Spleen (tissue), 13 donors: ENCODE measurements at regions of chr12 and their contacts with region 1.

Region 1: DNA sequence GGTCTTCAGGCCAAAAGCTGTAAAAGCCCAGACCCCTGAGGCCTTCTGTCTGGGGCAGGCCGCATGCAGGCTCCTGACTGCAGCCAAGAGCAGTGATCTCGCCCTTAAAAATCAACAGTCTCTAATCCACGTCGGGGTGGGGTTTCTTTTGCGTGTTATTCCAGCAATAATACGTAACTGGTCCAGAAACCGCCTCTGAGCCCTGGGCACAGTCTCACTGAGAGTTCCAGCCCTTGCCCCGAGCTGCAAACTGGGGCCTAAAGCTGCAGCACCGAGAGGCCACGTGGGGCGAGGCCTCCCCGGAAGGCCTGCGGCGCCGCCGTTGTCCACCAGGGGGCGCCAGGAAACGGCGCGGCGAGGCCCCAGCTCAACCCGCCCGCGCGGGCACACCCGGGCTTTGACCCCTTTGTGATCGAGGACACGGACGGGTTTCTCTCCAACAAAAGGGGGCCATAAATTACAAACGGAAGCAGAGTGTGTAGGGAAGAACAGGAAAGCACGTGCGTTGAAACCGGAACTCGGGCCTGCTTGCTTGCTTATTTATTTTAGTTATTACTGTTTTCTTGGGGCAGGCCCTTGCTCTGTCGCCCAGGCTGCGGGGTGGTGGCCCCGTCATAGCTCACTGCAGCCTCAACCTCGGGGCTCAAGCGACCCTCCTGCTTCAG is 87.2 kb downstream of the NINJ2 start:
- DNase-seq: peak; percentile 97
- H3K4me3 ChIP-seq: peak overlapping the region in 5 of 8 donors; percentile 5 to 56 (median 15)
- H3K27ac ChIP-seq: peak overlapping the region in 7 of 8 donors; percentile 26 to 78 (median 67)
- H3K4me1 ChIP-seq: peaks cover 9 to 36% (median 18%) of the 10 kb centered on the region in 6 donors
- H3K27me3 ChIP-seq: no peaks in the 10 kb centered on the region
- CTCF ChIP-seq: peak; percentile 98 to 100 (median 100)
- POLR2A ChIP-seq: no peak

Region 2: DNA sequence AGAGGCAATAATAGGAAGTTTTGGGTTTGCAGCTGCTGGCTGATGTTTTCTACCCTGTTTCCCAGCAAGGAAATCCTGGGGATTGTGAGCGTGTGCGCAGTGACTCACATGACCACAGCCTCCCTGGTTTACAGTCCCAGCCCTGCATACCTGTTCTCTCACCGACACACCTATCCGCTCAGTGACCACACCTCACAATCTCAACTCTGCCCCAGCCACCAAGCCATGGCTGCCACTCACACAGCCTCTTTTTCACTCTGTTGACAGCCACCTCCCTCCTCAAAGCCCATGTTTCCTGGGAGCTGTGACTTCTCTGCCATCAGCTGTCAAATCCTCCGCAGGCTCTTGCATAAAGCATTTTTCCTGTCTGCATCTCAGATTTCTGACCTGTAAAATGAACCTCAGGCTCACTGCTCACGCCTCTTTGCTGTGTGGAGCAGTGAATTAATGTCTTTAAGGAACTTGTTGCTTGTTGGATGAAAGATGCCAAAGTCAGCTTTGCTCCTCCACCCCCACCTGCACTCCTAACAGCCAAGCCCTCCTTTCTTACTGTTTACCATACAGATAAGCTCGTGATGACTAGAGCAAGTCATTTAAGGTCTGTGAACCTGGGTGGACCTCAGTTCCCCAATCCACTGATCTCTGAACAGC is 72.8 kb before region 1 on chr12:
- intact Hi-C with region 1: no loop called
- DNase-seq: no peak
- H3K4me3 ChIP-seq: no peak overlapping the region
- H3K27ac ChIP-seq: no peak overlapping the region
- H3K4me1 ChIP-seq: no peaks in the 10 kb centered on the region
- H3K27me3 ChIP-seq: peaks cover 0 to 16% (median 0%) of the 10 kb centered on the region in 7 donors
- CTCF ChIP-seq: no peak
- POLR2A ChIP-seq: no peak

Region 3: DNA sequence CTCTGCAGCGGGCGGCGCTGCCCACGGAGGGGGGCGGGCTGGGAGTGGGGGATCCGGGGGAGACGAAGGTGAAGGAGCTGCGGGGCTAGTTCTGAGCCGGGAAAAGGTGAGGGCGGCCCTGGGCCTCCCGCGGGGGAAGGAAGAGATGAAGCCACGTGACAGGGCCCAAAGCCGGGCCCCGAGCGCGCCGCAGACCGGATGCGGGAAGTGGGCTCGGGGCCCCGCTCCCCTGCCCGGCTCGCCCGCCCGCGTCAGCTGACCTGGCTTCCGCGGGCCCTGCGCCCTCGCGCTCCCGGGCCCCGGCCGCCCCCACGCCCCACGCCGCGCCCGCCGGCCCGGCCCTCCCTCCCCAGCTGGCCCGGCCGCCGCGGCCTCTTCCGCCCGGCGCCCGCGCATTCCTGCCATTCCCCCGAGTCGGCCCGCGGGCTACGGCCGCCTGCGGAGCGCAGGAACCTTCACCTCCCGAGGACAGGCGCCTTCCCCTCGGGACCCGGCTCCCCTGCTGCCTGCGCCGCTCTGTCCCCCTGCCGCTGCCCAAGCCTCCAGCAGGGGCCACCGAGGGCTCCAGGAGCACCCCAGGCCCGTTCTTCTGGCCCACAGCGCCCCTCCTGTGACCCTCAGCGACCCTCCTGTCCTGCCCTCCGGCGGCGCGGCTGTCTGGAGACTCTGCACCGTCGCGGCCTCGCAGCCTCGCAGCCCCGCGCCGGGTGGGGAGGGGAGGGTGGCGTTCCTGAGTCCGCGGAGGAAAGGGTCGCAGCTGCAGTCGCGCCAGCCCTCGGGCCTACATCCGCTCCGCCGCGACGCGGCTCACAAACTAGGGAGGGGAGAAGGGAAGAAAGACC is 66.8 kb after region 1 on chr12:
- intact Hi-C with region 1: loop called (anchors 5 kb)
- DNase-seq: peak; percentile 97
- H3K4me3 ChIP-seq: peak overlapping the region; percentile 46 to 85 (median 62)
- H3K27ac ChIP-seq: peak overlapping the region; percentile 99 to 100 (median 99)
- H3K4me1 ChIP-seq: peaks cover 19 to 94% (median 68%) of the 10 kb centered on the region in 6 donors
- H3K27me3 ChIP-seq: no peaks in the 10 kb centered on the region
- CTCF ChIP-seq: peak in 10 of 11 experiments; percentile 19 to 70 (median 54)
- POLR2A ChIP-seq: no peak

Region 4: GRCh38 chr12:751192-751998 is 175.3 kb after region 1 on chr12:
- intact Hi-C with region 1: loop called (anchors 10 kb)
- DNase-seq: peak; percentile 98
- H3K4me3 ChIP-seq: peak overlapping the region; percentile 70 to 89 (median 79)
- H3K27ac ChIP-seq: peak overlapping the region; percentile 85 to 100 (median 98)
- H3K4me1 ChIP-seq: peaks cover 14 to 53% (median 42%) of the 10 kb centered on the region in 6 donors
- H3K27me3 ChIP-seq: no peaks in the 10 kb centered on the region
- CTCF ChIP-seq: peak; percentile 66 to 93 (median 84)
- POLR2A ChIP-seq: peak in 1 of 3 donors; percentile 47

Region 5: DNA sequence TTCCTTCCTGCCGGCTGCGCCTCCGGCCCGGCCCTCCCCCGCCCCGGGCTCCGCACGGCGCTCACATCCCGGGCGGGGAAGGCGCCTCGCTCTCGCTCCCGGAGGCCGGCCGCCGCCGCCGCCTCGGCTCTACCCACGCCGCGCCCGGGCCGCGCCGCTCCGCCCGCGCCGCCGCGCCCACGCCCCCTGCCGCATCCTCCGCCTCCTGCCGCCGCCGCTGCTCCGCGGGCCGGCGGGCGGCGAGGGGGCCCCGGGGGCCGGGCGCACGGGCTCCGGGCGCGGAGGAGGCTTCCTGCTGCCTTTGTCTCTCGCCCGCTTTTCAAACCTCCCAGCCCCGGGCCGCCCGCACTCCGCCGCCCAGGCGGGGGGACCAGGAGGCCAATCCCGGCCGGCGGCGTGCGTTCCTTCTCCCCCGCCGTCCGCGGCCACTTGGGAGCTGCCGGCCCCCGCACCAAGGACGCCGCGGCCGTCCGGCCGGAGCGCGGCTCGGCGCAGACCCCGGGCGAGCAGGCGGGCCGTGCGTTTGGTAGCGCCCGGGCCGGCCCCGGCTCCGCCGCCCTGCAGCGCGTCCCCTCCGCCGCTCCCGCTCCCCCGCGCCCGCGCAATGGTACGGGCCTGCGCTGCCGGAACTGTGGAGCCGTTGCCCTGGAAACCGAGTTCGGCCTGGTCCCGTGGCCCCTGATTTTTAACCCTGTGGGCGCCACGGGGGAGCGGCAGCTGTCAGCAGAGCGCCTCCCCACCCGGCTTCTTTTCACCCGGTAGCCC is 1018.4 kb after region 1 on chr12 and contains the start of gene FBXL14:
- intact Hi-C with region 1: loop called (anchors 10 kb)
- DNase-seq: peak; percentile 97
- H3K4me3 ChIP-seq: peak within 1 kb of the TSS; percentile 58 to 98 (median 94)
- H3K27ac ChIP-seq: peak within 1 kb of the TSS; percentile 80 to 98 (median 96)
- H3K4me1 ChIP-seq: peaks cover 23 to 63% (median 52%) of the 10 kb centered on the region in 6 donors
- H3K27me3 ChIP-seq: no peaks in the 10 kb centered on the region
- CTCF ChIP-seq: peak in 1 of 11 experiments; percentile 9
- POLR2A ChIP-seq: peak in 1 of 3 donors; percentile 13
- total RNA-seq, gene FBXL14: 13.0 to 21.4 (median 19.8) TPM